A673 (cell line): ENCODE measurements at regions of chr7 and their contacts with region 1.

Region 1: GRCh38 chr7:31735991-31736982 is 49.3 kb downstream of the PPP1R17 start:
- DNase-seq: peak; percentile 87
- H3K4me3 ChIP-seq: no peak overlapping the region
- H3K27ac ChIP-seq: no peak overlapping the region
- H3K4me1 ChIP-seq: peaks cover 4% of the 10 kb centered on the region
- H3K27me3 ChIP-seq: no peaks in the 10 kb centered on the region
- CTCF ChIP-seq: peak; percentile 91

Region 2: GRCh38 chr7:30996256-30996655 is 740.0 kb before region 1 on chr7:
- CTCF ChIA-PET with region 1: no interaction called
- POLR2A ChIA-PET with region 1: no interaction called
- intact Hi-C with region 1: no loop called
- DNase-seq: no peak
- H3K4me3 ChIP-seq: no peak overlapping the region
- H3K27ac ChIP-seq: no peak overlapping the region
- H3K4me1 ChIP-seq: no peaks in the 10 kb centered on the region
- H3K27me3 ChIP-seq: no peaks in the 10 kb centered on the region
- CTCF ChIP-seq: no peak

Region 3: DNA sequence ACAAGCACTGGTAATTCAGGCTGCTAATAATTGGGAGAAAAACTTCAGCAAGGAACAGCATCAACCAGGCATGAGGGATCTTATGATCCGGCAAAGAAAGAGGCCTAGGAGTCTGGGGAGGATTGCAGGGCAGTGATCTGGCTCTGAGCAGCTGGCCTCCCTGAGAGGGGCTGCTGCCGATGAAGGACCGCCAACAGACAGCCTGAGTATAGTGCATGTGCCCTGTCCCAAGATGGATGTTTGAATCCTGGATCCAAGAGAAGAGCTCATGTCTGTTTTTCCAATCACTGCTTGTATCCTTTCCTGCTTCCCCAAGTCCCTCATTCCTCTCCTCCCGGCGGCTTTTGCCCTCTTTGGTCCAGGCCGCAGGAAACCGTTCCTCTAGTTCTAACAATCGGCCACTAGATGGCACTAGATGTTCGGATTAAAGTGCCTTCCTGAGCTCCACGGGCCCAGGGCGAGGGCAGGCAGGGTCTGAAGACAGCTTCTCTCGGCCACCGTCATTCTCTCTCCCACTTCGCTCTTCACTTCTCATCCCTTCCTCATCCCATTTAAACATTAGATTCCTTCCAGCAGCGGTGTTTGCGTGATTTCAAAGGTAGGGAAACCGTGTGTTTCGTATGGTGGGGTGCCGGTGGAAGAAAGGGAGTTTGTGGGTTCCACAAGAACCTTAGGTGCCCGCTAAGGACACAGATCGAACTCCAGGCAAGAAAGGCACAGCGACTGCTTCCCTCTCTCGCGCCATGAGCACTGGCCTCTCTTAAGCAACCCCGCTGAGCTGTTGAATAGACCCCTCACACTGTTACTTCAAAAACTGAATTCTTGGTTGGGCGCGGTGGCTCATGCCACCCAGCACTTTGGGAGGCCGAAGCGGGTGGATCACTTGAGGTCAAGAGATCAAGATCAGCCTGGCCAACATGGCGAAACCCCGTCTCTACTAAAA is 601.8 kb before region 1 on chr7:
- CTCF ChIA-PET with region 1: no interaction called
- POLR2A ChIA-PET with region 1: no interaction called
- intact Hi-C with region 1: loop called (anchors 1 kb)
- DNase-seq: peak; percentile 91
- H3K4me3 ChIP-seq: no peak overlapping the region
- H3K27ac ChIP-seq: no peak overlapping the region
- H3K4me1 ChIP-seq: no peaks in the 10 kb centered on the region
- H3K27me3 ChIP-seq: no peaks in the 10 kb centered on the region
- CTCF ChIP-seq: peak; percentile 75

Region 4: DNA sequence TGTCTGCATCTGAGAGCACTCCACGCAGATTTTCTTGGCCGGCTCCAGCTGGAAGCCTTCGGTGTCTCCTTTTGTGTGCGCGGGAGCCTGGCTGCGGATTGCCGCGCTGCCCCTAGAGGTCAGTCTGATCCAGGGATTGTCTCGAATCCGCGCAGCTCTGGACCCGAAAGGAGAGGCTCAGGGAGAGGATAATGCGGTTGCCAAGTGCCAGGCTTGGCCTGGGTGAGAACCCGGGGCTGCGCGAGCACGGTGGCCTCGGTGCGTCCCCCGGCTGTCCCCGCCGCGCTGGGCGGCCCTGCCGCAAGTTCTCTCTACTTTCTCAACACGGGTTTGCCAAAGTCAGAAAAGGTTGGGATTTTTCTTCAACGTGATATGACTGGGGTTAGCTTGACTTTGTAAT is 543.3 kb before region 1 on chr7:
- CTCF ChIA-PET with region 1: no interaction called
- POLR2A ChIA-PET with region 1: no interaction called
- intact Hi-C with region 1: loop called (anchors 1 kb)
- DNase-seq: peak; percentile 95
- H3K4me3 ChIP-seq: no peak overlapping the region
- H3K27ac ChIP-seq: peak overlapping the region; percentile 41
- H3K4me1 ChIP-seq: peaks cover 11% of the 10 kb centered on the region
- H3K27me3 ChIP-seq: no peaks in the 10 kb centered on the region
- CTCF ChIP-seq: peak; percentile 97

Region 5: GRCh38 chr7:31443457-31443856 is 292.8 kb before region 1 on chr7:
- CTCF ChIA-PET with region 1: no interaction called
- POLR2A ChIA-PET with region 1: no interaction called
- intact Hi-C with region 1: loop called (anchors 2 kb)
- DNase-seq: peak; percentile 89
- H3K4me3 ChIP-seq: no peak overlapping the region
- H3K27ac ChIP-seq: peak overlapping the region; percentile 54
- H3K4me1 ChIP-seq: peaks cover 21% of the 10 kb centered on the region
- H3K27me3 ChIP-seq: no peaks in the 10 kb centered on the region
- CTCF ChIP-seq: peak; percentile 83

Region 6: GRCh38 chr7:31683445-31684225 is 52.7 kb before region 1 on chr7:
- CTCF ChIA-PET with region 1: no interaction called
- POLR2A ChIA-PET with region 1: no interaction called
- intact Hi-C with region 1: no loop called
- DNase-seq: no peak
- H3K4me3 ChIP-seq: no peak overlapping the region
- H3K27ac ChIP-seq: no peak overlapping the region
- H3K4me1 ChIP-seq: no peaks in the 10 kb centered on the region
- H3K27me3 ChIP-seq: no peaks in the 10 kb centered on the region
- CTCF ChIP-seq: no peak